Common myeloid progenitor, CD34-positive (primary cell): ENCODE measurements at regions of chr1 and their contacts with region 1.

Region 1: GRCh38 chr1:101357444-101357986 is 120.7 kb downstream of the S1PR1 start:
- DNase-seq: peak; percentile 85 to 89 (median 86)
- H3K4me3 ChIP-seq: no peak overlapping the region
- H3K27ac ChIP-seq: no peak overlapping the region
- H3K4me1 ChIP-seq: peaks cover 0 to 2% (median 0%) of the 10 kb centered on the region in 4 experiments
- H3K27me3 ChIP-seq: no peaks in the 10 kb centered on the region

Region 2: DNA sequence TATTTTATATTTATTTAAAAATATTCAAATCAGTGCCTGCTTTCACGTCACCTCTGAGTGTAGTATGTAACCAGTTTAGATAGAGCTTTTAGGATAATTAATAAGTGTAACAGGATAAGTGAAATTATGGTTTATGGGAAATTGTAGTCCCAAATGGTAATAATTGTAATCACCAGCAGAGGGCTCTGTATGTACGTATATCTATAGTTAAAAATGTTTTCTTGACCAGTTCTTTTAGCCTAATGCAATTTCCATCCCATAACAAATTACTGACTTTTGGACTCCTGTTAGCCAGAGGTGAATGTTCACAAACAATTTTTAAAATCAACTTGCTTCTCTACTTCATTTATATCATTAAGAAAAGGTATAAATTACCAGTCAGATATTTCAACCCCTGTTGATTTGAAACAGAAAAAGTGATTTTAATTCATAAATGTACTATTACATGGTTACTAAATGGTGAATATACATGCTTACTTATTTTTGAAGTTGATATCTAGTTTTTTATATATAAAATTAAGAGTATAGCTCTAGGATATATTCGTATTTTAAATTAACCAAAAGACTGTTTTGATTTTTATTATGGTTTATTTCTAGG is 436.3 kb before region 1 on chr1:
- CTCF ChIA-PET with region 1: interaction called, 10 read pairs
- POLR2A ChIA-PET with region 1: no interaction called
- DNase-seq: peak; percentile 53 to 67 (median 58)
- H3K4me3 ChIP-seq: no peak overlapping the region
- H3K27ac ChIP-seq: no peak overlapping the region
- H3K4me1 ChIP-seq: no peaks in the 10 kb centered on the region
- H3K27me3 ChIP-seq: no peaks in the 10 kb centered on the region

Region 3: DNA sequence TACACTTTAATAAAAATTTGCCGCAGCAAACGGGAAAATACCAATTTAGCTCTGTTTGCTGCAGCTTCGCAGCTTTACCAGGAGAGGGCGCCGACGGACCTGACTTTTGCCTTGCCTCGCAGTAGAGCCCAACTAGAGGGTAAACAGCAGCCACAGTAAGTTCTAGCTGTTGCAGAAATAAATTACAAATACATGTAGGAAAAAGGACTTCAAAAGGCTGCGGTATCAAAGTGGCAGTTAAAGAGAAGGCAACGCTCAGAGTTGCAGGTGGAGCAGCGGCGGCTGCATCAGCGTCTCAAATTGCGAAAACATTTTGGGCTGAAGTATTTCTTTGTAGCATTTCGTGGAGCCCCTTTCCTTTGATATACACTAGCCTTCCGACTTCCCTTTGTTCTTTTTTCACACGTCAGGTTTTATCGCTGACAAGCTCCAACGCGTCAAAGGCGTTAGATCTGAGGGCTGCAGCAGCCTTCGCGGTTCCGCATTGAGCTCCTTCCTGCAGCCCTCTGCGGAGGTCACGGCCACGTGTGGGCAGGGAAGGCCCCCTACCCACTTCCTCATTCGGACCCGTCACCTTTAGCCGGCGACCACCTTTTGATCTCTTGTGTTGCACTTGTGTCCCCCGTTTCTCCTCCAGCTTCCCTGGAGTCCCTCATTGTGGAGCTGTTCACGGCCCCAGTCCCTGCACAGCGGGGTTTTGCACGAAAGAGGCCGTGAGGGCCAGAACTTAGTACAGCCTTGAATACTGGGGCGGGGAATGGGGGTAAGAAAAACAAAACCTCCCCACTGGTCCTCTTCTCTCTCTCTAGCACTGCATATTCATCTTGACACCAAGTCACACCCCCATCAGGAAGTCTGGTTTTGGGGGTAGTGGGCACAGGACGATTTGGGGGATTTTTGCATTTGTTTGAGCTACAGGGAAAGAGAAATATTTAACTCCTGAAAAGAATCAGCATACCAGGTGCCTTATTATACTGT is 47.9 kb before region 1 on chr1:
- CTCF ChIA-PET with region 1: interaction called, 38 read pairs
- POLR2A ChIA-PET with region 1: no interaction called
- DNase-seq: peak; percentile 85 to 95 (median 93)
- H3K4me3 ChIP-seq: peak overlapping the region in 6 of 7 experiments; percentile 40 to 71 (median 62)
- H3K27ac ChIP-seq: peak overlapping the region; percentile 18 to 58
- H3K4me1 ChIP-seq: peaks cover 19 to 43% (median 34%) of the 10 kb centered on the region in 4 experiments
- H3K27me3 ChIP-seq: no peaks in the 10 kb centered on the region

Region 4: GRCh38 chr1:101317590-101317989 is 39.9 kb before region 1 on chr1:
- CTCF ChIA-PET with region 1: interaction called, 10 read pairs
- POLR2A ChIA-PET with region 1: no interaction called
- DNase-seq: no peak
- H3K4me3 ChIP-seq: no peak overlapping the region
- H3K27ac ChIP-seq: no peak overlapping the region
- H3K4me1 ChIP-seq: peaks cover 0 to 3% (median 0%) of the 10 kb centered on the region in 4 experiments
- H3K27me3 ChIP-seq: no peaks in the 10 kb centered on the region

Region 5: GRCh38 chr1:101346419-101346818 is 11.1 kb before region 1 on chr1:
- CTCF ChIA-PET with region 1: interaction called, 12 read pairs
- POLR2A ChIA-PET with region 1: no interaction called
- DNase-seq: peak in 1 of 3 donors; percentile 5
- H3K4me3 ChIP-seq: no peak overlapping the region
- H3K27ac ChIP-seq: no peak overlapping the region
- H3K4me1 ChIP-seq: no peaks in the 10 kb centered on the region
- H3K27me3 ChIP-seq: no peaks in the 10 kb centered on the region

Region 6: GRCh38 chr1:101378576-101378975 is 21.1 kb after region 1 on chr1:
- CTCF ChIA-PET with region 1: no interaction called
- POLR2A ChIA-PET with region 1: no interaction called
- DNase-seq: no peak
- H3K4me3 ChIP-seq: no peak overlapping the region
- H3K27ac ChIP-seq: no peak overlapping the region
- H3K4me1 ChIP-seq: peaks cover 0 to 13% (median 7%) of the 10 kb centered on the region in 4 experiments
- H3K27me3 ChIP-seq: no peaks in the 10 kb centered on the region

Region 7: GRCh38 chr1:101388904-101389546 is 31.5 kb after region 1 on chr1:
- CTCF ChIA-PET with region 1: no interaction called
- POLR2A ChIA-PET with region 1: no interaction called
- DNase-seq: peak; percentile 29 to 82 (median 74)
- H3K4me3 ChIP-seq: no peak overlapping the region
- H3K27ac ChIP-seq: no peak overlapping the region
- H3K4me1 ChIP-seq: peaks cover 0 to 2% (median under 1%) of the 10 kb centered on the region in 4 experiments
- H3K27me3 ChIP-seq: no peaks in the 10 kb centered on the region